ENCODE measurements at regions of chr1 and their contacts with region 1.

Region 1: DNA sequence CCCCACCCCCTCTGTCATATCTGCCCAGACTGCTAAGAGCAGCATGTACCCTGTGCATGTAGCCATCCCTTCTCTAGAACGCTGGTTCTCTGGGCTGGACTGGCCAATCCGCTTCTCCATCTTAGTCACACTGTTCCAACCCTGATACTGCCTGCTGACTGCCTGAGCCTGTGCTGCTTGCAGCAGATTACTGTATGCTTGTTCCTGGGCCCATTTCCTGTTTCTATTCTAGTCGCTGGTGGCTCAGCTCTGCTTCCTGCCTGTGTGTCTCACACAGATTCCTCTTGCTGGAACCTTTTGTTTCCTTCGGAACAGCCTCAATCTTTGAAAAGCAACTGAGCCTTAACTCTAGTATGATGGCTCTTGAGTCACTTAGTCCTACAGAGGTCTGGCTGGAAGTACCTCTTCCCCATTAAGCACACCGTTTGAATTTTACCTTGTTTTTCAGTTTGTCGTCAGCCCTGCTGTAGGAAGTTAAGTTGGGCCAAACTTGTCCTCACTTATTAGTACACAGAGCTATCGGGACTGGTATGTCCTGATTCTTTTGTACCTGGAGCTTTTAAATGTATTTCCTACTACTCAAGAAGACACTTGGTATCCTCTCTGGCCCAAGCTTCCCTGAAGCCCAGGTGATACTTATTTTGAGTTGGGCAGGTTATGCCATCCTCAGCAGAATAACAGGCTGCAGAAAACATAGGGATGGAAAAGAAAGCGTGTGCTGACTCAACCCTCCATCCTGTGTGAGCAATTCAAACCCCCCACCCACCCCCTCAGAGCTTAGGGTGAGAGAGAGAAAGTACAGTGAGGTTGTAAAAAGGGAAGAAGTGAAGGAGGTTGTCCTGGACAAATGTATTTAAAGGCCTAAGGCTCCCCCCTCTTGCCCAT is 43.4 kb upstream of the PIGV start:
- DNase-seq: peak; percentile 88
- ATAC-seq: peak; percentile 95
- H3K4me3 ChIP-seq: peak overlapping the region; percentile 7 to 51 (median 39)
- H3K4me3 Mint-ChIP-seq: peak overlapping the region; percentile 80
- H3K27ac ChIP-seq: peak overlapping the region; percentile 75 to 96
- H3K27ac Mint-ChIP-seq: peak overlapping the region; percentile 92
- H3K4me1 ChIP-seq: peaks cover 82 to 88% of the 10 kb centered on the region in 2 donors
- H3K4me1 Mint-ChIP-seq: peaks cover 83% of the 10 kb centered on the region
- H3K27me3 ChIP-seq: no peaks in the 10 kb centered on the region
- H3K27me3 Mint-ChIP-seq: no peaks in the 10 kb centered on the region
- CTCF ChIP-seq: no peak

Region 2: GRCh38 chr1:26723013-26723991 is 21.0 kb before region 1 on chr1:
- CTCF ChIA-PET with region 1: interaction called, 8 read pairs
- POLR2A ChIA-PET with region 1: interaction called, 3 read pairs
- intact Hi-C with region 1: loop called (anchors 2 kb)
- DNase-seq: peak; percentile 45
- ATAC-seq: peak; percentile 44
- H3K4me3 ChIP-seq: peak overlapping the region in 3 of 5 experiments; percentile 21 to 53 (median 31)
- H3K4me3 Mint-ChIP-seq: peak overlapping the region; percentile 74
- H3K27ac ChIP-seq: peak overlapping the region; percentile 39 to 60
- H3K27ac Mint-ChIP-seq: peak overlapping the region; percentile 82
- H3K4me1 ChIP-seq: peaks cover 82 to 89% of the 10 kb centered on the region in 2 donors
- H3K4me1 Mint-ChIP-seq: peaks cover 85% of the 10 kb centered on the region
- H3K27me3 ChIP-seq: no peaks in the 10 kb centered on the region
- H3K27me3 Mint-ChIP-seq: no peaks in the 10 kb centered on the region
- CTCF ChIP-seq: no peak